MCF 10A (cell line): ENCODE measurements at regions of chr7 and their contacts with region 1.

Region 1: GRCh38 chr7:100478966-100479665 is at the start of gene TSC22D4:
- DNase-seq: peak; percentile 93
- H3K4me3 Mint-ChIP-seq: peak within 1 kb of the TSS; percentile 93
- H3K27ac Mint-ChIP-seq: peak within 1 kb of the TSS; percentile 99
- H3K4me1 Mint-ChIP-seq: peaks cover 7% of the 10 kb centered on the region
- H3K27me3 Mint-ChIP-seq: no peaks in the 10 kb centered on the region
- CTCF ChIP-seq: no peak
- total RNA-seq, gene TSC22D4: 36.0 and 43.8 TPM in 2 replicates

Region 2: DNA sequence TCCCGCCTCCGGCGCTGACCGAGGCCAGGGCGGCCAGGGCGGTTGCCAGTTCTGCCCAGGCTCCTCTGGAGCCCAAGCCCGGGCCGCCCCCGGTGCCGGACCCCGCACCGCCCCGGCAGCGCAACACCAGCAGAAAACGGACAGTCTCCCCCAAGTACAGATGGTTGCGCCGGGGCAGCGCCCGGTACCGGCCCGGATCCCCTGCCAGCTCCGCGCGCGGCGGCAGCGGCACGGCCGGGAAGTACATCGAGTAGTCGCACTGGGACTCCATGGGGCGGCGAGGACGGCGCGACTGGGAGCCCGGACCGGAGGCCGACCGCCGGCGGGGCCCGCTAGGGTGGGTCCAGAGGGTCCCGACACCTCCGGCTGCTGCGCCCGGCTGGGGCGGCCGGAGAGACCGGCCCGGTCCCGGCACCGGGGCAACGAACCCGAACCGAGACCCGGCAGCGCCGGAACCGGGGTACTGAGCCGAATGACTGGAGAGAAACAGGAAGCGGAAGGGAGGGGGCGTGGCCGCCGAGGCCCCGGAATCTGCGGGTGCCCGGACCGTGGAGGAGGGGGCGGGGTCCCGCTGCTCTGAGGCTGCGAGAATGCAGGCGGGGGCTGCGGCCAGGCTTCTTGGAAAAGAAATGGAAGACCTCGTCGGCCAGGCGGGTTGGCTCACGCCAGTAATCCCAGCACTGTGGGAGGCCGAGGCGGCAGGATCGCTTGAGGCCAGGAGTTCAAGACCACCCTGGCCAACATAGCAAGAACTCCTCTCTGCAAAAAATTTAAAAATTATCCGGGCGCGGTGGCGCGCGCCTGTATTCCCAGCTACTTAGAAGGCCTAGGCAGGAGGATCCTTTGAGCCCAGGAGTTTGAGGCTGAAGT is 320.7 kb before region 1 on chr7 and contains the start of gene TRAPPC14:
- CTCF ChIA-PET with region 1: no interaction called
- POLR2A ChIA-PET with region 1: no interaction called
- intact Hi-C with region 1: no loop called
- DNase-seq: peak; percentile 77
- H3K4me3 Mint-ChIP-seq: peak within 1 kb of the TSS; percentile 77
- H3K27ac Mint-ChIP-seq: no peak within 1 kb of the TSS
- H3K4me1 Mint-ChIP-seq: peaks cover 16% of the 10 kb centered on the region
- H3K27me3 Mint-ChIP-seq: no peaks in the 10 kb centered on the region
- CTCF ChIP-seq: no peak
- total RNA-seq, gene TRAPPC14: 18.0 and 21.7 TPM in 2 replicates

Region 3: DNA sequence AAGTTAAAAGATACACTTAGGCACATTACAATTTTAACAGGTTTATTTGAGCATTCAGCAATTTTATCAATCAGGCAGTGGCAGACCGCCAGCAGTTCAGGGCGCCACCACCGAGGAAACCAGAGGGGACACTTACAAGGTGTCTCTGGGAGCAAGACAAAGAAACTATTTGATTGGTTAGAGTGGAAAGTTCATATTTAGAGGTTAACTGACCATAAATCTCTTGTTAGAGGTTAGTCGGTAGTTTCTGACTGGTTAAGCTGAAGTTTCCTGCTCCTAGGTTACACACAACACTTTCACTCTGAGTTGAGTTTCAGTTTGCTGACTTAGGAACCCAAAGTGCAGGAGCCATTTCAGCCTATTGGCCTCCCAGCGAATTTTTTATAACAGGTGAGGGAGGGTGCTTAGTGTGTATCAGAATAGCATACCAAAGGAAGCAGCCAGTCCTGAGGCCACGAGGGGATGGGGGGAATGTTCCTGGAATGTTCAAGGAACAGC is 270.2 kb before region 1 on chr7:
- CTCF ChIA-PET with region 1: no interaction called
- POLR2A ChIA-PET with region 1: no interaction called
- intact Hi-C with region 1: no loop called
- DNase-seq: no peak
- H3K4me3 Mint-ChIP-seq: no peak overlapping the region
- H3K27ac Mint-ChIP-seq: no peak overlapping the region
- H3K4me1 Mint-ChIP-seq: no peaks in the 10 kb centered on the region
- H3K27me3 Mint-ChIP-seq: peaks cover 56% of the 10 kb centered on the region
- CTCF ChIP-seq: no peak

Region 4: GRCh38 chr7:100538654-100539435 is 59.7 kb after region 1 on chr7 and contains the start of gene AGFG2:
- CTCF ChIA-PET with region 1: interaction called, 4 read pairs
- POLR2A ChIA-PET with region 1: interaction called, 12 read pairs
- intact Hi-C with region 1: no loop called
- DNase-seq: peak; percentile 100
- H3K4me3 Mint-ChIP-seq: peak within 1 kb of the TSS; percentile 81
- H3K27ac Mint-ChIP-seq: peak within 1 kb of the TSS; percentile 36
- H3K4me1 Mint-ChIP-seq: peaks cover 28% of the 10 kb centered on the region
- H3K27me3 Mint-ChIP-seq: no peaks in the 10 kb centered on the region
- CTCF ChIP-seq: no peak
- total RNA-seq, gene AGFG2: 8.4 and 11.9 TPM in 2 replicates

Region 5: GRCh38 chr7:100545360-100546128 is 66.4 kb after region 1 on chr7:
- CTCF ChIA-PET with region 1: interaction called, 7 read pairs
- POLR2A ChIA-PET with region 1: interaction called, 18 read pairs
- intact Hi-C with region 1: no loop called
- DNase-seq: peak; percentile 94
- H3K4me3 Mint-ChIP-seq: peak overlapping the region; percentile 1
- H3K27ac Mint-ChIP-seq: peak overlapping the region; percentile 78
- H3K4me1 Mint-ChIP-seq: peaks cover 48% of the 10 kb centered on the region
- H3K27me3 Mint-ChIP-seq: no peaks in the 10 kb centered on the region
- CTCF ChIP-seq: no peak

Region 6: GRCh38 chr7:100563809-100564400 is 84.8 kb after region 1 on chr7:
- CTCF ChIA-PET with region 1: interaction called, 45 read pairs
- POLR2A ChIA-PET with region 1: interaction called, 11 read pairs
- intact Hi-C with region 1: no loop called
- DNase-seq: peak; percentile 60
- H3K4me3 Mint-ChIP-seq: no peak overlapping the region
- H3K27ac Mint-ChIP-seq: no peak overlapping the region
- H3K4me1 Mint-ChIP-seq: no peaks in the 10 kb centered on the region
- H3K27me3 Mint-ChIP-seq: no peaks in the 10 kb centered on the region
- CTCF ChIP-seq: peak; percentile 78

Region 7: GRCh38 chr7:100673300-100673941 is 194.3 kb after region 1 on chr7 and contains the start of gene GNB2:
- CTCF ChIA-PET with region 1: no interaction called
- POLR2A ChIA-PET with region 1: no interaction called
- intact Hi-C with region 1: loop called (anchors 5 kb)
- DNase-seq: peak; percentile 99
- H3K4me3 Mint-ChIP-seq: peak within 1 kb of the TSS; percentile 76
- H3K27ac Mint-ChIP-seq: peak within 1 kb of the TSS; percentile 94
- H3K4me1 Mint-ChIP-seq: peaks cover 11% of the 10 kb centered on the region
- H3K27me3 Mint-ChIP-seq: no peaks in the 10 kb centered on the region
- CTCF ChIP-seq: no peak
- total RNA-seq, gene GNB2: 196 and 201 TPM in 2 replicates

Region 8: DNA sequence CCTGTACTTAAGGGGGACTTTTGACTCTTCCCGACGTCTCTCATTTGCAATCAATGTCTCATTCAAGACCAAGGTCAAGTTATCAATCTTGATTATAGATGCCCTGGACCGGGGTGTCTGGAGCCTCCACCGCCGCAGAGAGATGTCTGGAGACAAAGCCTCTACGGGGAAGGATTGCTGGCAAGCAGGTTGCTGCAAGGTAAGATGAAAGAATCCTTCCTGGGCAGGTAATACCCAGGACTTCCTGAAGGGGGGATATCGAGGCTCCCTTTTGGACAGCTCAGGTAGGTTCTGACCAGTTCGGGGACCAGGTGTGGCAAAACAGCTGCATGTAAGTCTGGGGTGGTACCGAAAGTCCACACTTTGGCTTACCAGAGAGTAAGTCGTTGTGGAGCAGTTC is 1325.9 kb after region 1 on chr7:
- CTCF ChIA-PET with region 1: no interaction called
- POLR2A ChIA-PET with region 1: no interaction called
- intact Hi-C with region 1: no loop called
- DNase-seq: peak; percentile 41
- H3K4me3 Mint-ChIP-seq: no peak overlapping the region
- H3K27ac Mint-ChIP-seq: no peak overlapping the region
- H3K4me1 Mint-ChIP-seq: peaks cover 6% of the 10 kb centered on the region
- H3K27me3 Mint-ChIP-seq: peaks cover 17% of the 10 kb centered on the region
- CTCF ChIP-seq: peak; percentile 32